ENCODE measurements at regions of chr20 and their contacts with region 1.

Region 1: DNA sequence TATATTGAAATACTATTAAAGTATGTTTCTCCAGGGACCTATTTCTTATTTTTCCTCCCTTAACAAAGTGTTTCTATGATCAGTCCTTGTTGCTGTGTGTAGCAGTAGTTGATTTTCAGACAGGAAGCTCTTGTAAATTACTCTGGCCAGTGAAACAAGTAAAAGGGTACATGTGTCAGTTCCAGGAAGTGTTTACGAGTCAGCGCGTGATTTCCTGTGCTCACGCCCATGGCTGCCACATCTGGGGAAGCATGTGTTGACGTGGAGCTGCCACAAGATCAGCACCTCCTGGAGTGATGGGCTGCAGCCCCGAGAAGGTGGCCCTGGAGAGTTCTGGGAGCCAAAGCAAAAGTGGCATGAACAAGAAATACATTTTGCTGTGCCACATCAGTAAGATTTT is 38.6 kb upstream of the GGTLC1 start:
- DNase-seq: peak; percentile 56 to 92 (median 78)
- ATAC-seq: peak; percentile 98
- H3K4me3 ChIP-seq: peak overlapping the region in 1 of 2 experiments; percentile 0
- H3K4me3 Mint-ChIP-seq: peak overlapping the region; percentile 62
- H3K27ac ChIP-seq: peak overlapping the region; percentile 82 to 94
- H3K27ac Mint-ChIP-seq: peak overlapping the region; percentile 97
- H3K4me1 ChIP-seq: peaks cover 26% of the 10 kb centered on the region
- H3K4me1 Mint-ChIP-seq: peaks cover 44% of the 10 kb centered on the region
- H3K27me3 ChIP-seq: no peaks in the 10 kb centered on the region
- H3K27me3 Mint-ChIP-seq: no peaks in the 10 kb centered on the region
- CTCF ChIP-seq: no peak

Region 2: GRCh38 chr20:24045621-24046318 is 18.5 kb after region 1 on chr20:
- CTCF ChIA-PET with region 1: interaction called, 6 read pairs
- POLR2A ChIA-PET with region 1: interaction called, 6 read pairs
- intact Hi-C with region 1: loop called in 1 of 2 experiments (anchors 2 kb)
- DNase-seq: peak in 4 of 9 experiments; percentile 17 to 44 (median 25)
- ATAC-seq: peak; percentile 70
- H3K4me3 ChIP-seq: peak overlapping the region in 1 of 2 experiments; percentile 3
- H3K4me3 Mint-ChIP-seq: peak overlapping the region; percentile 49
- H3K27ac ChIP-seq: peak overlapping the region; percentile 30 to 59
- H3K27ac Mint-ChIP-seq: peak overlapping the region; percentile 89
- H3K4me1 ChIP-seq: peaks cover 29% of the 10 kb centered on the region
- H3K4me1 Mint-ChIP-seq: peaks cover 47% of the 10 kb centered on the region
- H3K27me3 ChIP-seq: no peaks in the 10 kb centered on the region
- H3K27me3 Mint-ChIP-seq: no peaks in the 10 kb centered on the region
- CTCF ChIP-seq: no peak

Region 3: DNA sequence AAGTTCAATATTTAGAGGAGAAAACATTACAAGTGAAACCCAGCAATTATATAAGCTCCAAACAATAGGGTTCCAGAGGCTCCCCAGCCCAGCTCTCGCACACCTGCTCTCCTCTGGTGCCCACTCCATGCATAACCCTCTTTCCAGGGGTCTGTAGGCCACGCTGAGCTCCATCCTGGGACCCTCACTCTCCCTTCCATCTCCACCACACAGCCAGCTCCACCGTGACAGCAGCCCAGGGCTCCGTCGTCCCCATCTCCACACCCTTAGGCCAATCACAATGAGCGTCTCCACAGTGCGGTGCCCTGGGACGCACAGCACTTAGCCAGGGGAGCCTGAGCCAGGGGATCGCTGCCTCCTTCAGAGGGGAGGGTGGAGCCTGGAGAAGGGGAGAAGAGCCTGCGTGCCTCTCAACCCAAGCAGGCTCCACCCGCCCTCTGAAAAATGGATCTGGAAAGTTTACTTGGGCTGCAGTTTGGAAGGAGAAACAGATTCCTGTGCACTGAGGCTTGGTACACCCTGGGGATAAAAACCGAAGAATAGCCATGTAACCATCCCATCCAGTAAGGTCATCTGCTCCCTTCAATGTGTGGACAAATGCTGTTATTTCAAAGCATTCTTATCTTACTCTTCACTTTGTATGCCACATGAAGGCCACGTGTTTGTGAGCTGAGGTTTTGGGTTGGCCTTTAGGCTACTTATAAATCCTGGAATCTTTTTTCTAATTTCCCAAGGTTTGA is 33.8 kb after region 1 on chr20:
- CTCF ChIA-PET with region 1: no interaction called
- POLR2A ChIA-PET with region 1: interaction called, 3 read pairs
- intact Hi-C with region 1: loop called in 1 of 2 experiments (anchors 5 kb)
- DNase-seq: no peak
- ATAC-seq: no peak
- H3K4me3 ChIP-seq: no peak overlapping the region
- H3K4me3 Mint-ChIP-seq: no peak overlapping the region
- H3K27ac ChIP-seq: no peak overlapping the region
- H3K27ac Mint-ChIP-seq: no peak overlapping the region
- H3K4me1 ChIP-seq: peaks cover 7% of the 10 kb centered on the region
- H3K4me1 Mint-ChIP-seq: peaks cover 7% of the 10 kb centered on the region
- H3K27me3 ChIP-seq: no peaks in the 10 kb centered on the region
- H3K27me3 Mint-ChIP-seq: no peaks in the 10 kb centered on the region
- CTCF ChIP-seq: no peak

Measured in CD8-positive, alpha-beta T cell (primary cell).